ENCODE measurements at regions of chr6 and their contacts with region 1.

Region 1: GRCh38 chr6:131914967-131915751 is 36.0 kb downstream of the CCN2 start:
- DNase-seq: peak; percentile 74
- H3K4me3 ChIP-seq: no peak overlapping the region
- H3K27ac ChIP-seq: no peak overlapping the region
- H3K27me3 ChIP-seq: no peaks in the 10 kb centered on the region
- CTCF ChIP-seq: peak; percentile 90

Region 2: GRCh38 chr6:131519670-131520436 is 395.3 kb before region 1 on chr6:
- CTCF ChIA-PET with region 1: no interaction called
- POLR2A ChIA-PET with region 1: no interaction called
- DNase-seq: no peak
- H3K4me3 ChIP-seq: no peak overlapping the region
- H3K27ac ChIP-seq: no peak overlapping the region
- H3K27me3 ChIP-seq: no peaks in the 10 kb centered on the region
- CTCF ChIP-seq: peak; percentile 67

Region 3: GRCh38 chr6:131694831-131695426 is 220.2 kb before region 1 on chr6:
- CTCF ChIA-PET with region 1: interaction called, 234 read pairs
- POLR2A ChIA-PET with region 1: no interaction called
- DNase-seq: peak; percentile 50
- H3K4me3 ChIP-seq: no peak overlapping the region
- H3K27ac ChIP-seq: no peak overlapping the region
- H3K27me3 ChIP-seq: no peaks in the 10 kb centered on the region
- CTCF ChIP-seq: peak; percentile 98

Region 4: DNA sequence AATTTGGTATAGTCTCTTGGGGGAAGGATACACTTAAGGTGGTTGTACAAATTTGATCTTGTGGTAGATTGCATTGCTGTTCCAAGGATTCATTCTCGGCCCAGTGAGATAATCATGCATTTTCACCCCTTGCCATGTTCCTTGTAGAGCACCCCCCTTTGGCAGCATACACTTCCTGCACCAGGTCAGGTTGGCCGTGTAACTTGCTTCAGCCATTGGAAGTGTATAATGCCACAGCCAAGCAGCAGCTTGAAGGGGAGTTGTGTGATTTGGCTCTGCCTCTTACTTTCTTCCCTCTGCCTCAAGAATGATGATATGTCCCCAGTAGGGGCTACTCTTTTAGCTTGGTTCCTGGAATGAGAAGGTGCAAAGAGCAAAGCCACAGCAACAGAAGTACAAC is 14.1 kb after region 1 on chr6:
- CTCF ChIA-PET with region 1: interaction called, 57 read pairs
- POLR2A ChIA-PET with region 1: no interaction called
- DNase-seq: no peak
- H3K4me3 ChIP-seq: no peak overlapping the region
- H3K27ac ChIP-seq: no peak overlapping the region
- H3K27me3 ChIP-seq: no peaks in the 10 kb centered on the region
- CTCF ChIP-seq: 0 out of 2 replicates have a peak, but pooled peaks have one; percentile 10

Region 5: DNA sequence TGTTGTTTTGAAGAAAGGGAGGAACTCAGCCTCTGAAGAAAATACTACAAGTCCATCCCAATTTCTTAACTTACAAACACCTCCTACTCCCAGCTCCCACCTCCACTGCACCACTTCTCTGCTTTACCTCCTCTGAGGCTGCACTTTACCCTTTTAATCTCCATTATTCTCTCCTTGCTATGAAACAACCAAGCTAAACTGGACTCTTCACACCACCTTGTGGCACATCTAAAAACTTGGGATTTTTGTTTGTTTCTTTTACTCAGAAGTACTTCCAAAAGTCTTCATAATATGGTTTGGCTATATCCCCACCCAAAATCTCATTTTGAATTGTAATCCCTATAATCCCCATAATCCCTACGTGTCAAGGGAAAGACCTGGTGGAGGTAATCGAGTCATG is 343.9 kb after region 1 on chr6:
- CTCF ChIA-PET with region 1: interaction called, 42 read pairs
- POLR2A ChIA-PET with region 1: no interaction called
- DNase-seq: no peak
- H3K4me3 ChIP-seq: no peak overlapping the region
- H3K27ac ChIP-seq: no peak overlapping the region
- H3K27me3 ChIP-seq: no peaks in the 10 kb centered on the region
- CTCF ChIP-seq: peak; percentile 52

Region 6: DNA sequence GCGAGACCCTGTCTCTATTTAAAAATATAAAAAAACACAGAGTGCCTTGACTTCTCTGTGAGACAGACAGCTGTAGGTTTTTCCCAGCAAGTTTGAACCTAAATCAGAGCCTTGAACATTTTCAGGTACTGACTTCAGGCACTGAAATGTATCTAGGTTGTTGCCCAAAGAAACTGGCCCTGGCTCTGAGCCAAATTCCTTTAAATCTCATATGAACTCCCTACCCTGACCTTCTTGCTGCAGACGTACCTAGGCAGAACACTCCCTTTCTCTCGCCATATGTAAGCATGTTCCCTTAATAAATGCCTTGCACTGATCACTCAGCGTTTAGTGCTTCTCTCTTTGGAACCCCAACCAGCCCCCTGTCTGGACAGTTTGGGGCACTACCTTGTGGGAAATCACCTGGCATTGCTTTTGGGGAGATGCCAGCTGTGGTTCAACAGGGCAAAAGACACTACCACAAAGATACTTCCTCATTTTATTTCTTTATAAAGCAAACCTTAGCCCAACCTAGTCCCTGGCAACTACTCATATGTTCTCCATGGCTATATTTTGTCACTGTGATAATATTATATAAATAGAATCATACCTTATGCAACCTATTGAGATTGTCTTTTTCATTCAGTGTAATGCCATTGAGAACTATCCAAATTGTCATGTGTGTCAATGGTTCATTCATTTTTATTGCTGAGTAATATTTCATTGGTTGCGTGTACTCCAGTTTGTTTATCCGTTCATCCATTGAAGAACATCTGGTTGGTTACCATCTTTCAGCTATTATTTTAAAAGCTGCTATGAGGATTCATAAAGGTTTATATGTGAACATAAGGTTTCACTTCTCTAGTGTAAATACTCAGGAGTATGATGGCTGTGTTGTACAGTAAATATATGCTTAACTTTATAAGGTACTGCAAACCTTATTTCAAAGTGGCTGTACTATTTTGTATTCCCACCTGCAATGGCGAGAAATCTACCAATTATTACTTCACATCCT is 371.2 kb after region 1 on chr6:
- CTCF ChIA-PET with region 1: interaction called, 17 read pairs
- POLR2A ChIA-PET with region 1: no interaction called
- DNase-seq: no peak
- H3K4me3 ChIP-seq: no peak overlapping the region
- H3K27ac ChIP-seq: no peak overlapping the region
- H3K27me3 ChIP-seq: no peaks in the 10 kb centered on the region
- CTCF ChIP-seq: no peak

Region 7: DNA sequence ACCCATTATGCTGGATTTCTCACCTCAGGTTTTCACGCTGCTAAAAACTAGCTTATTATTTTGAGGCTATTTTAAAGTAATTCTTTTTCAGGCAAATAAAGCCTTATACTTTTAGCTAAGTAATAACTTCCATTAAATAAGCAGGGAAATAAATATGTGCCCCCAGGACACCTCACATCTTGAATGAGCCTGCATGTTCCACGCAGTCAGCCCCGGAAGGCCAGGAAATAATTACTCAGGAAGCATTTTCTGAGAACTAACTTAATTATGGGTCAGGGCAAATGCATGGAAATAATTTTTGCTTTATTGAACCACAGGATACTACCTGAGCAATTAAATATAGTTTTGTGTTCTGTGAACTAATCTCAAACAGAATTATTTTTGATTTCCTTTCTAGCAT is 556.6 kb after region 1 on chr6:
- CTCF ChIA-PET with region 1: interaction called, 12 read pairs
- POLR2A ChIA-PET with region 1: no interaction called
- DNase-seq: no peak
- H3K4me3 ChIP-seq: no peak overlapping the region
- H3K27ac ChIP-seq: no peak overlapping the region
- H3K27me3 ChIP-seq: no peaks in the 10 kb centered on the region
- CTCF ChIP-seq: no peak

Region 8: DNA sequence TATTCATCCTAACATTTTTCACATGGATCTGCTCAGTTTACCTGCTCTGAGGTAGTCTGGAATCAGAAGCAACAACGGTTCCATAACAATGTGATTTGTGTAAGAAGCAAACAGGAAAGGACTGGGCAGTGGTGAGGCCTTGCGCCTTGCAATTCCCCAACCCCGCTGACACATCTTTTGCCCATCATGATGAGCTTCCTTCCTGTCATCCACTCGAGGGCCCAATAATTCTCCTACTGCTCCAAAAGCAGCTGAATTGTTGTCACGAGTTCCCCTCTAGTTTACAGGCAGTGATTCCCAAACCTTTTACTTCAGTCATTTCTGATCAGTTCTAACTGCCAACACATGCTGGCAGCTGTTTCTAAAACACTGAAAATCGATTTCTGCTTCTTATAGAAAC is 574.9 kb after region 1 on chr6:
- CTCF ChIA-PET with region 1: interaction called, 17 read pairs
- POLR2A ChIA-PET with region 1: no interaction called
- DNase-seq: no peak
- H3K4me3 ChIP-seq: no peak overlapping the region
- H3K27ac ChIP-seq: no peak overlapping the region
- H3K27me3 ChIP-seq: no peaks in the 10 kb centered on the region
- CTCF ChIP-seq: no peak